ENCODE measurements at regions of chr20 and their contacts with region 1.

Region 1: DNA sequence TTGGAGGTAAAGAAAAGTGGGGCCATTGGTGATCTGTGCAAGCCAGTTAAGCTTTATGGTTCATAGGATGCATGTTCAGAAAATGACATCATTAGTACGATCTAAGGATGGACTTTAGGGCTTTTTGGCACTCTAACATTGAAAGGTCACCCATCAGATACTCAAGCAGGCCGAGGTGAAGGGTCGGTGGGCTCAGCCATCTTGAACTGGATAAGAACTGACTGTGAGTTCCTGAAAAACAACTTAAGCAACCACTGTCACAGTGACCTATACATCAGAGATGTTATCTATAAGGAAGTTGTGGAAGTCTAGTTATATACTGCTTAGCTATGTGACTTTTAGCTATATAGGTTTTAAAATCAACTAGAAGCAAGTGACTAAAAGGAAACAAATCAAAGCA is 13.0 kb upstream of the ITCH start:
- DNase-seq: no peak
- ATAC-seq: no peak
- H3K4me3 Mint-ChIP-seq: no peak overlapping the region
- H3K27ac Mint-ChIP-seq: no peak overlapping the region
- H3K4me1 Mint-ChIP-seq: peaks cover 2% of the 10 kb centered on the region
- H3K27me3 Mint-ChIP-seq: no peaks in the 10 kb centered on the region

Region 2: DNA sequence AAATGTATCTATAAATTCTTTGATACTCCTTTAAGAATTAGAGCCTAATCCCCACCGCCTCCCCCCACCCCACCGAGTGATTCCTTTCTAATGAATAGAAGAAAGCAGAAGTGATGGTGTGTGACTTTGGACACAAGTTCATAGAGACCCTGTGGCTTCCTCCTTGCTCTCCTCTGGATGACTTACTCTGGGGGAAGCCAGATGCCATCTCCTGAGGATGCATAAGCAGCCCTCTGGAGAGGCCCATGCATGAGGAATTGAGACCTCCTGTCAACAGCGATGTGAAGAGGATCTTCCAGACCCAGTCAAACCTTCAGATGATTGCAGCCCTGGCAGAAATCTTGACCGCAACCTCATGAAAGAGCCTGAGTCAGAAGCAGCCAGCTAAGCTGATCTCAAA is 68.1 kb before region 1 on chr20:
- CTCF ChIA-PET with region 1: no interaction called
- POLR2A ChIA-PET with region 1: no interaction called
- intact Hi-C with region 1: loop called in 1 of 2 experiments (anchors 2 kb)
- DNase-seq: no peak
- ATAC-seq: no peak
- H3K4me3 Mint-ChIP-seq: no peak overlapping the region
- H3K27ac Mint-ChIP-seq: no peak overlapping the region
- H3K4me1 Mint-ChIP-seq: no peaks in the 10 kb centered on the region
- H3K27me3 Mint-ChIP-seq: no peaks in the 10 kb centered on the region

Measured in activated CD4-positive, alpha-beta T cell treated with anti-CD3 and anti-CD28 coated beads for 36 hours (primary cell).